Activated naive CD4-positive, alpha-beta T cell treated with anti-CD3 and anti-CD28 coated beads, Interleukin-2, amount 10 ng/mL, durations not matched to agents 7 days and 5 days (primary cell): ENCODE measurements at regions of chr10 and their contacts with region 1.

Region 1: DNA sequence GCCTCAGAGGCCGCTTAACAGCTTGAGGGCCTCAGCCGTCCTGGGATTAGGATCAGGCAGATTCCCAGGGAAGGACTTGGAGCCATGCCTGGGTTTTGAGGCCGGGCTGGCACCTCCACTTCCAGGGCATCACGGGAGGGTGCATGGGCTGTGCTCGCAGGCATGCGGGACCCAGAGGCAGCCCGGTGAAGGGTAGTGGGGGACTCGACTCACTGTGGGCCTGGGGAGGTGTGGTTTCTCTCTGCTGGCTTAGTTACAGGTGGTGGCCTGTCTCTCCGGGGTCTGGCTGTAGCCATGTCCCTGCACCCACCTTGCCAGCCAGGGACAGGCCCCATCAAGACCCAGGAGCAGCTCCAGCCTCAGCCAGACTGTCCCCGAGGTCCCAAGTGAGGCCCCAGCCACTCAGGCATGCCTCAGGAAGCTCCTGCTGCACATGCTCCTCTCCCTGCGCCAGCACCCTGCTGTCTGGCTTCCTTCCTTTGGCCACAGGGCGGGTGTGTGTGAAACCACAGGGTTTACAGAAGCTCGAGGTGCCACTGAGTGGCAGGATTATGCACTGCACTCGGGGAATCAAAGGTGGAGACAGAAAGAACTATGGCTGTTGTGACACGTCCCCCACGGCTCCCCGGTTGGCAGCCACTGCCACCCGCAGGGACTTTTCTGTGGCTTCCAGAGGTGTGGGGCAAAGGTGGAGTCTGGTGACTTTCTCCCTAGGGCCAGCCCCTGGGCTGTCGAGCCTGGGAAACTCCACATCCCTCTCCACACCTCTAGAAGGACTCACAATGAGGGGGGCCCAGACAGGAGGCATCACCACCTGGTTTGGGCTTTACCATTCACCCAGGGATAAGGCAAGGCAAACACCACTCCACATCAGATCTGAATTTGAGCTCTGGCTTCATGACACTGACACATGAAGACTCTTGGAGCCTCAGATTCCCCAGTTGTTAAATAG is 19.7 kb downstream of the GOLGA7B start:
- DNase-seq: peak; percentile 94
- H3K4me3 Mint-ChIP-seq: no peak overlapping the region
- H3K27ac Mint-ChIP-seq: peak overlapping the region; percentile 52
- H3K4me1 Mint-ChIP-seq: peaks cover 19% of the 10 kb centered on the region
- H3K27me3 Mint-ChIP-seq: peaks cover 44% of the 10 kb centered on the region

Region 2: GRCh38 chr10:97572214-97572989 is 297.0 kb before region 1 on chr10 and contains the start of gene ANKRD2:
- CTCF ChIA-PET with region 1: no interaction called
- DNase-seq: peak; percentile 74
- H3K4me3 Mint-ChIP-seq: no peak within 1 kb of the TSS
- H3K27ac Mint-ChIP-seq: peak within 1 kb of the TSS; percentile 49
- H3K4me1 Mint-ChIP-seq: no peaks in the 10 kb centered on the region
- H3K27me3 Mint-ChIP-seq: peaks cover 13% of the 10 kb centered on the region

Region 3: DNA sequence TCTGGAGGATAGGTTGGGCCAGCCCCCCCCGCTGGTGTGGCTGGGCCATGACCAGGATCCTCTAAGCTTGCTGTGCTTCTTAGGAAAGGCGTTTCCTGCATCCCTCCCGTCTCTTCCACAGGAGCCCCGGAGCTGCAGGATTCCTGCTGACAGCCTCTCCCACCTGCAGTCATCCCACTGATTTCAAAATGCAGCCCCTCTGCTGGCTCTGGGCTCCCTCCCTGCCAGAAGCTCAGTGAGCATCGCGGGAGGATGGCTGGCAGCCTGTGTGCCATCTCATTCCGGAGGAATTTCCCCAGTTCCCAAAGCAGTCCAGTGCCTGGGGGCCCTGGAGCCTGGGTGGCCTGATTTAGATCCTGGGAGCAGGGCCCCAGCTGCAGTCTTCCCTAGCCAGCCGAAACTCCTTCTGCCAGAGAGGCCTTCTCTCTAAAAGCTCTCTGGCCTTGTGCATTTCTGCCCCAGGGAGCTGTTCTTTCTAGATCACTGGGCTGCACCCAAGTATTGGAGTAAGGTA is 41.5 kb before region 1 on chr10:
- CTCF ChIA-PET with region 1: no interaction called
- DNase-seq: no peak
- H3K4me3 Mint-ChIP-seq: no peak overlapping the region
- H3K27ac Mint-ChIP-seq: peak overlapping the region; percentile 53
- H3K4me1 Mint-ChIP-seq: peaks cover 21% of the 10 kb centered on the region
- H3K27me3 Mint-ChIP-seq: peaks cover 12% of the 10 kb centered on the region

Region 4: DNA sequence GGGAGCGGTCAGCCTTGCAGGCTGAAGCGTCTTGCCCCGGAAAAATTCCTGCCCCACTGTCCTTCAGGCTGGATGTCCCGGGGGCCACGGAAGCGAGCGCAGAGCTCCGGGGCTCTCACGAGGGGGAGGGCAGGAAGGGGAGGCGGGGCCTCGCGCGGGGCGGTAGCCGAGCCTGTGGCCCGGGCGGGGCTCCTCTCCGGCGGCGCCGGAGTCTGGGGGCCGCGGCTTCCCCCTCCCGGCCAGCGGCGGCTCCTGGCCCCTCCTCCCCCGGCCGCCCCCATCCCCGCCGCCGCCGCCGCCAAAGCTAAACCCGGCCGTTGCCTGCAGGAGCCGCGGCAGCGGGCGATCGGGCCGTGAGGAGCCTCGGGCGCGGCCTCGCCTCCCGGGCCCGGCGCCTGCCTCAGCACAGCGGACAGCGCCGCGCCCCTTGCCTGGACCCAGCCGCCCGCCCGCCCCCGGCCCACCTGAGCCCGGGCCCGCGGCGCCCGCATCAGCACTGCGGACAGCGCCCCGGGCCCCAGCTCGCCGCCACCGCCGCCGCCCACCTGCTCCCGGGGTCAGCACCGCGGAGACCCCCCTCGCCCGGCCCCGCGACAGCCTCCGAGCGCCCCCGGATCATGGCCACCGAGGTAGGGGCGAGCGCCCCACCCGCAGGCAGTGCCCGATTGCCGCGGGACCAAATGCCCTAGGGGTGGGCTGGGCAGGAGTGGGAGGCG is 19.5 kb before region 1 on chr10 and contains the start of gene GOLGA7B:
- CTCF ChIA-PET with region 1: interaction called, 19 read pairs
- DNase-seq: peak; percentile 83
- H3K4me3 Mint-ChIP-seq: peak within 1 kb of the TSS; percentile 90
- H3K27ac Mint-ChIP-seq: peak within 1 kb of the TSS; percentile 91
- H3K4me1 Mint-ChIP-seq: peaks cover 50% of the 10 kb centered on the region
- H3K27me3 Mint-ChIP-seq: peaks cover 9% of the 10 kb centered on the region